Adrenal gland (tissue), 19 donors: ENCODE measurements at regions of chr11 and their contacts with region 1.

Region 1: GRCh38 chr11:111582163-111582562 is 20.1 kb upstream of the SIK2 start:
- DNase-seq: no peak
- H3K4me3 ChIP-seq: no peak overlapping the region
- H3K27ac ChIP-seq: no peak overlapping the region
- H3K4me1 ChIP-seq: no peaks in the 10 kb centered on the region
- H3K27me3 ChIP-seq: no peaks in the 10 kb centered on the region
- CTCF ChIP-seq: no peak
- POLR2A ChIP-seq: no peak

Region 2: GRCh38 chr11:111592491-111592890 is 10.3 kb after region 1 on chr11:
- intact Hi-C with region 1: loop called in 1 of 2 experiments (anchors 2 kb)
- DNase-seq: no peak
- H3K4me3 ChIP-seq: no peak overlapping the region
- H3K27ac ChIP-seq: no peak overlapping the region
- H3K4me1 ChIP-seq: peaks cover 0 to 3% of the 10 kb centered on the region in 2 donors
- H3K27me3 ChIP-seq: no peaks in the 10 kb centered on the region
- CTCF ChIP-seq: no peak
- POLR2A ChIP-seq: no peak